Right lobe of liver (tissue), 6 donors: ENCODE measurements at regions of chr12 and their contacts with region 1.

Region 1: DNA sequence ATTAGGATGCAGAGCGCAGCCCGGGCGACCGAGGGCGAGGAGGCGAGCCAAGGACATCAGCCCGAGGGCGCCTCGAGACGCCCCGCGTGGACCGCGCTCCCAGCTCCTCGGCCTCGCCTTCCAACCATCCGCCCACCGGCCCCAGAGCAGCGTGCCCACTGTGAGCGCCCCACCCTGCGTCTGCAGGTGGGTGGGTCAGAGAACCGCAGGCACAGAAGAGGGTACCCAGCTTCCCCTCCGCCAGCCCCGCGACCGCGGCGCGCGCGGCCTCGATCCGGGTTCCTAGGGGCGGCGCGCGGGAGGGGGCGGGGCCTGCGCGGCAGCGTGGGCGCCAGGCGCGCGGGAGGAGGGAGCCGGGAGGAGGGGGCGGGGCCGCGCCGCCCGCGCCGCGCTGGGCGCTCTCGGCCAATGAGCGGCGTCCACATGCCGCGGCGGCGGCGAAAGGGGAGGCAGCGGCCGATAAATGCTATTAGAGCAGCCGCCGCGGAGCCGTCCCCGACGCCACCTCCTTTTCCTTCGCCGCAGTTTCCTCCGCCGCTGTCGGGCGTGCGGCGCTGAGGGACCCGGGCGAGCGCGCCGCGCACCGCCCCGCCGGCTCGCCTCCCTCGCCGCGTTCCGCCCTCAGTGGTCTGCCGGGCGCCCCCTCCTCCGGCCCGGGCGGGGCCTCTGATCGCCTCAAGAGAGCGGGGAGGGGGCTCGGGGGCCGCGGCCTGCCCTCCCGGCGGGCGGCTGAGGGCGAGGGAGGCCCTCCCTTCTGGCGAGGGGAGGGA is at the start of gene ATP2A2:
- DNase-seq: peak; percentile 93
- ATAC-seq: peak; percentile 85 to 96 (median 90)
- H3K4me3 ChIP-seq: peak within 1 kb of the TSS; percentile 81 to 89 (median 84)
- H3K27ac ChIP-seq: peak within 1 kb of the TSS; percentile 95 to 97 (median 97)
- H3K4me1 ChIP-seq: peaks cover 0 to 38% (median 15%) of the 10 kb centered on the region in 4 donors
- H3K27me3 ChIP-seq: no peaks in the 10 kb centered on the region
- CTCF ChIP-seq: peak in 1 of 4 donors; percentile 1
- POLR2A ChIP-seq: peak; percentile 99
- total RNA-seq, gene ATP2A2: 95.6 to 155 (median 113) TPM

Region 2: GRCh38 chr12:109777549-109777948 is 503.4 kb before region 1 on chr12:
- intact Hi-C with region 1: no loop called
- DNase-seq: peak in 1 of 3 donors; percentile 13
- ATAC-seq: peak in 1 of 4 donors; percentile 19
- H3K4me3 ChIP-seq: no peak overlapping the region
- H3K27ac ChIP-seq: no peak overlapping the region
- H3K4me1 ChIP-seq: peaks cover 0 to 14% (median 4%) of the 10 kb centered on the region in 4 donors
- H3K27me3 ChIP-seq: no peaks in the 10 kb centered on the region
- CTCF ChIP-seq: no peak
- POLR2A ChIP-seq: no peak

Region 3: DNA sequence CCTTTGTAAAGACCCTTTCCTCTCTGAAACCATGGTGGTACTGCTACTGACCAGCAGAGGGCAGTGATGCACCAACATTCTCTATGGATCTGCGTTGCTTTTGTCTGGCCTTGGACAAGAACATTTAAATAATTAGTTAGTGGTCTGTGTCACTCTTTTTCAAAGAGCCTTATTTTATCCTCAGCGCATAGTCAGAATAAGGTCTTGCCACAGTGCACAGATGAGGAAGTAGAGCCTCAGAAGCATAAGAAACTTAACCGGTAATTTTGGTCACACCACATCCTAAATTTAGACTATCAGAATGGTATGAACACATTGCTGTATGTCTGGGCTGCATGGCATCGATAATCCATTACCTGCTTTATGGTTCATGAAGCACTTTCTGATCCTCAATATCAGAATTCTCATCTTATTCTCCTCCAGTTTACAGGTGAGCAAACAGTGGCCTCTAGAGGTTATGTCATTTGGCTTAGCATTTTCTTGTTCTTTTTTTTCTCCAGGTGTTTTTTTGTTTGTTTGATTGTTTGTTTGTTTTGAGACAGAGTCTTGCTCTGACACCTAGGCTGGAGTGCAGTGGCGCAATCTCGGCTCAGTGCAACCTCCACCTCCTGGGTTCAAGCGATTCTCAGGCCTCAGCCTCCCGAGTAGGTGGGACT is 180.5 kb before region 1 on chr12:
- intact Hi-C with region 1: loop called in 1 of 2 experiments (anchors 10 kb)
- DNase-seq: peak in 2 of 3 donors; percentile 61 to 63
- ATAC-seq: peak; percentile 74 to 80 (median 78)
- H3K4me3 ChIP-seq: no peak overlapping the region
- H3K27ac ChIP-seq: peak overlapping the region; percentile 6 to 92 (median 81)
- H3K4me1 ChIP-seq: peaks cover 0 to 24% (median 7%) of the 10 kb centered on the region in 4 donors
- H3K27me3 ChIP-seq: no peaks in the 10 kb centered on the region
- CTCF ChIP-seq: peak; percentile 79 to 94 (median 82)
- POLR2A ChIP-seq: no peak

Region 4: DNA sequence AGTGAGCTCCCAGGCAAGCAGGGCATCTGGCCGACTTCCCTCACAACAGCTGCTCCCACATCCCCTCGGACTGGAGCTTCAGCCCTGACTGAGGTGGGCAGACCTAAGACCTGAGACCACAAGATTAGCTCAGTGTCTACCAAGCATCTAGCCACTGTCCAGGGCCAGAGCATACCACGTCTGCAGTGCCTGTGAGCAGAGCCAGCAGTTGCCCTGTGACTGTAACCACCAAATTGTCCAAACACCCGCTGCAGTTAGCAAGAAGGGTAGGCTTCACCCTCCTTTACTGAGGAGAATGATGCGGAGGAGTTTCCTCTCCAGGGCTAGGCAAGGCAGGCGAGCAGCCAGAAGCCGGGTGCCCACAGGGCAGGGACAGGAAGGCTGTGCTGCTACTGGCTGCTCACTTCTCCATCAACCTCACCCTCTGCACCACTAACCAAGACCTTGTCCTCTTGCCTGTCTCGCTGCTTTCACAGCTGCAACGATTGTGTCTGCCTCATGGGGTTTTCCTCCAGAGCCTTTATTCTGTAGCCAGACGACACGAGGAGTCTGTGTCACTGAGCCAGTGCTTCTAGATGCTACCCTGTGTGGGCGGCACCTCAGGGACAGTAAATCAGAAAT is 68.7 kb after region 1 on chr12:
- intact Hi-C with region 1: loop called in 1 of 2 experiments (anchors 10 kb)
- DNase-seq: no peak
- ATAC-seq: peak in 3 of 4 donors; percentile 5 to 11 (median 5)
- H3K4me3 ChIP-seq: no peak overlapping the region
- H3K27ac ChIP-seq: no peak overlapping the region
- H3K4me1 ChIP-seq: no peaks in the 10 kb centered on the region
- H3K27me3 ChIP-seq: no peaks in the 10 kb centered on the region
- CTCF ChIP-seq: no peak
- POLR2A ChIP-seq: no peak

Region 5: GRCh38 chr12:110382683-110383082 is 101.7 kb after region 1 on chr12:
- intact Hi-C with region 1: no loop called
- DNase-seq: no peak
- ATAC-seq: no peak
- H3K4me3 ChIP-seq: no peak overlapping the region
- H3K27ac ChIP-seq: no peak overlapping the region
- H3K4me1 ChIP-seq: no peaks in the 10 kb centered on the region
- H3K27me3 ChIP-seq: no peaks in the 10 kb centered on the region
- CTCF ChIP-seq: no peak
- POLR2A ChIP-seq: no peak

Region 6: GRCh38 chr12:110513842-110514241 is 232.9 kb after region 1 on chr12:
- intact Hi-C with region 1: no loop called
- DNase-seq: no peak
- ATAC-seq: no peak
- H3K4me3 ChIP-seq: no peak overlapping the region
- H3K27ac ChIP-seq: no peak overlapping the region
- H3K4me1 ChIP-seq: no peaks in the 10 kb centered on the region
- H3K27me3 ChIP-seq: no peaks in the 10 kb centered on the region
- CTCF ChIP-seq: no peak
- POLR2A ChIP-seq: no peak

Region 7: DNA sequence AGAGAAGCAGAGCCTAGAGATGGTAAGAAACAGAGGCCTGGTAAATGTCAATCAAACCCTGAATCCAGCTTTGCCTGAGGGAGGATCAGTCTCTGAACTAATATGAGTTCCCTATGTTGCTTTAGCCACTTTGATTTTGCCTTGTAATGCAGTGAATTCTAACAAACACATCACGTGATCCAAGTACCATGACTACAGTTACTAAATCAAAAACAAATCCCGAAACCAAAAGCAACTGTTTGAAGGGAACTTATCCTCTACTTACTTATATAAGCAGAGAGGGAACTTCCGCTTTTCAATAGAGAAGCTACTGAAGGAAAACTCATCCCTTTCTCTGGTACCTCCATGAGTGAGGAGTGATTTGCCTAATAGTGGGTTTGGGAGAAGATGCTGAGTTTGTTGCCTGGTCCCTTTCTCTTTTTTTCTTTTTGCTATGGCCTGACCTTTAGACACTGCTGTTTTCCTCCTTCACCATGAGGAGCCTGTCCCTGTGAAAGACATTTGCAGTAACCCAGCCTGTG is 309.9 kb after region 1 on chr12:
- intact Hi-C with region 1: no loop called
- DNase-seq: no peak
- ATAC-seq: peak; percentile 57 to 73 (median 62)
- H3K4me3 ChIP-seq: peak overlapping the region in 1 of 3 donors; percentile 7
- H3K27ac ChIP-seq: peak overlapping the region; percentile 39 to 91 (median 72)
- H3K4me1 ChIP-seq: peaks cover 0 to 33% (median 13%) of the 10 kb centered on the region in 4 donors
- H3K27me3 ChIP-seq: no peaks in the 10 kb centered on the region
- CTCF ChIP-seq: no peak
- POLR2A ChIP-seq: no peak